Activated naive CD4-positive, alpha-beta T cell treated with anti-CD3 and anti-CD28 coated beads for 36 hours (primary cell): ENCODE measurements at regions of chr12 and their contacts with region 1.

Region 1: DNA sequence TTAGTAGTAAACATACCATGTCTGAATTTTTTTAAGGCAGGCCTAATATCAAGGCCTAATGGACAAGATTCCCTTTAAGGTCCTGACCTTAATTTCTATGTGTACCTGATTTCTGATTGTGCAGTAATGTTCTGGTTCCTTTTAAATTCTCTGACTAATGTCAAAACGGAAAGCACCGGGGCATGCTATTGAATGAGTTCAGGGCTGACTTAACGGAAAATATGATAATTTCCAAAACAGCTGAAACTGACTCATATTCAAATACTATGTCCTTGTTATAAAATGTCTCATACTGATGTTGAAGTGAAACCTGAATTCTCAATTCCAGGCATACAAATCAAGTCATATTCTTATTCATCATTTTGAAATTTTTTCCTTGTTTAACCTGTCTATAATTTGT is 6.7 kb downstream of the TAS2R43 start:
- DNase-seq: peak; percentile 21
- H3K4me3 Mint-ChIP-seq: no peak overlapping the region
- H3K27ac Mint-ChIP-seq: no peak overlapping the region
- H3K4me1 Mint-ChIP-seq: peaks cover 5% of the 10 kb centered on the region
- H3K27me3 Mint-ChIP-seq: no peaks in the 10 kb centered on the region

Region 2: GRCh38 chr12:11059784-11060183 is 25.6 kb before region 1 on chr12:
- CTCF ChIA-PET with region 1: no interaction called
- intact Hi-C with region 1: loop called (anchors 1 kb)
- DNase-seq: no peak
- H3K4me3 Mint-ChIP-seq: no peak overlapping the region
- H3K27ac Mint-ChIP-seq: no peak overlapping the region
- H3K4me1 Mint-ChIP-seq: peaks cover 4% of the 10 kb centered on the region
- H3K27me3 Mint-ChIP-seq: no peaks in the 10 kb centered on the region

Region 3: DNA sequence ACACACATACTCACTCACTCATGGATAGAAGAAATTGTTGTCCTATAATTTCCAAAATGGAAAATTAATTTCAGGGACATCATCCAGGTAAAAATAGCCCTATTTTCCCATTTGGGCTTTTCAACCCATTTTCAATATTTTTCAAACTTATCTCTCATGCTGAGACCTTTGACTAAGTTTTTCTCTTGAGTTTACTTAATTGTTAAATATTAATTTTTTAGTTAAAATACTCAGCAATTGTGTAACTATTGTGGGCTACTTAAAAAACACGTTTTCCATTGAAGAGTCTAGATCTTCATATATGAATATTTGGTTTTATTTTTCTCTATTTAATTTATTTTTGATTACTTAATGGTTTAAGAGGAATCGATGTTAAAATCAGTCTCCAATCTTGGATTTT is 20.9 kb after region 1 on chr12:
- CTCF ChIA-PET with region 1: no interaction called
- intact Hi-C with region 1: no loop called
- DNase-seq: no peak
- H3K4me3 Mint-ChIP-seq: no peak overlapping the region
- H3K27ac Mint-ChIP-seq: no peak overlapping the region
- H3K4me1 Mint-ChIP-seq: peaks cover 21% of the 10 kb centered on the region
- H3K27me3 Mint-ChIP-seq: no peaks in the 10 kb centered on the region

Region 4: DNA sequence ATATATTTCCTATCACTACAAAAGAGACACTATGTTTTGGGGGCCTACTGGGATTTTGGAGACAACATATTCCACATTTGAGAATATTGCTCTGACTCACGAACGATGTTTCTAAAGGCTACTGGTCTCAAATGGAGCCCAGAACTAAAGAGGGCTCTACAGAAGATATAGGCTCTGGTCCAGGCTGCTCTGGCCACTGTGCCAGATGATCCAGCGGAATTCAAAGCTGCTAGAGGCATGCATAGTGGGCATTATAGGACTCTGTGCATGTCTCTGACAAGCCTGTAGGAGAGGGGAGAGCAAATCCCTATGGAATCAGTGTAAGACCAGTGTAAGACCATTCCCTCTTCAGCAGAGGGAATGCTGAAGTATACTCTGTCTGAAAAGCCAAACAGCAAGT is 45.0 kb after region 1 on chr12:
- CTCF ChIA-PET with region 1: no interaction called
- intact Hi-C with region 1: loop called (anchors 1 kb)
- DNase-seq: no peak
- H3K4me3 Mint-ChIP-seq: no peak overlapping the region
- H3K27ac Mint-ChIP-seq: no peak overlapping the region
- H3K4me1 Mint-ChIP-seq: peaks cover 13% of the 10 kb centered on the region
- H3K27me3 Mint-ChIP-seq: no peaks in the 10 kb centered on the region